Natural killer cell (primary cell): ENCODE measurements at regions of chrX and their contacts with region 1.

Region 1: DNA sequence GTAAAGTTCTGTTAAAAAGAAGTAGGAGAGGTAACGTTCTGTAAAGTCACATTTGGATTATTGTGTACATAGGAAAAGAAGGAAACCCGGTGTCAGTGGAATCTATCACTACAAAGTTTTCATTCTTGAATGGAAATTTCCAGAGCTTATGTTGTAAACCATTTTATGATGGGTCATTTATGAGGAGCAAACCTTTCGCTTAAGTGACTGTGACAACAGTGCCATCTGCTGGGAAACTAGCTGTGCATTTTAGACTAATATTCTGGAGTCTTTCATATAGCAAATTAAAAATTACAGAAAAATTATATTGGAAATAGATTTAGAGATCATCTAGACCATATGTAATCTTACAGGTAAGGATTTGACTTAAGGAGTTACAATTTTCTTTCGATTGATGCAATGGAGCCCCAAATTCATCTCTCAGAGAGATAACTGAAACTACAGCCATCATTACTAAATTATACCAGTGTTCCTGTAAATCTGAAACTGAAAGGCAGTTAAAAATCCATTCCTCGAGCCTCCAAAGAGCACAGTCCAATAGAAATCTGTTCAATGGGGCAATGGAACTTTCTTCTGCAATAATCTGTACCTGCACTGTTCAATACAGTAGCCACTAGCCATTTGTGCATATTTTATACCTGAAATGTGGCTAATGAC is 26.9 kb downstream of the ASB9 start:
- DNase-seq: peak in 1 of 2 donors; percentile 71
- ATAC-seq: no peak
- H3K4me3 ChIP-seq: no peak overlapping the region
- H3K4me3 Mint-ChIP-seq: no peak overlapping the region
- H3K27ac ChIP-seq: no peak overlapping the region
- H3K27ac Mint-ChIP-seq: no peak overlapping the region
- H3K4me1 ChIP-seq: no peaks in the 10 kb centered on the region
- H3K4me1 Mint-ChIP-seq: no peaks in the 10 kb centered on the region
- H3K27me3 ChIP-seq: no peaks in the 10 kb centered on the region
- H3K27me3 Mint-ChIP-seq: no peaks in the 10 kb centered on the region
- CTCF ChIP-seq: peak; percentile 54

Region 2: DNA sequence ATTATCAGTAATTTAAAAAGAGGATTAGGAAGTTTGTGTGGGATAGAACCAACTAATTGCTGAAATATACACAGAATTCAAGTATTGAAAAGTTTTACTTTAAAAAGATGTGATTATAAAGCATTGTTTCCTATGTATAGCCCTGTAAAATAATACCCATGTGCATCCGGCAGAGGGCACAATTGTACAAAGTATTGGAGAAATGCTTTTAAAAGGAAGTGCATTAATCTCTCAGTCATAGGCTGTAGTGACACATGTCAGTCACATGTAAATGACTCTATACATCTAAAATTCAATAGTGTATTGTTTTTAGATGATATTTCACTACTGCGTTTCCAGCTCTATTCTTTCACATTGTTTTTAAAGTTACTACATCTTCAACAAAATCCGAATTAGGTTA is 1203.7 kb before region 1 on chrX:
- intact Hi-C with region 1: loop called (anchors 1 kb)
- DNase-seq: peak in 1 of 2 donors; percentile 78
- ATAC-seq: peak; percentile 82 to 92 (median 84)
- H3K4me3 ChIP-seq: no peak overlapping the region
- H3K4me3 Mint-ChIP-seq: no peak overlapping the region
- H3K27ac ChIP-seq: no peak overlapping the region
- H3K27ac Mint-ChIP-seq: no peak overlapping the region
- H3K4me1 ChIP-seq: no peaks in the 10 kb centered on the region
- H3K4me1 Mint-ChIP-seq: no peaks in the 10 kb centered on the region
- H3K27me3 ChIP-seq: no peaks in the 10 kb centered on the region
- H3K27me3 Mint-ChIP-seq: peaks cover 10 to 48% of the 10 kb centered on the region in 2 donors
- CTCF ChIP-seq: peak; percentile 70

Region 3: GRCh38 chrX:15107367-15107988 is 135.5 kb before region 1 on chrX:
- intact Hi-C with region 1: loop called (anchors 2 kb)
- DNase-seq: peak in 1 of 2 donors; percentile 40
- ATAC-seq: no peak
- H3K4me3 ChIP-seq: no peak overlapping the region
- H3K4me3 Mint-ChIP-seq: no peak overlapping the region
- H3K27ac ChIP-seq: no peak overlapping the region
- H3K27ac Mint-ChIP-seq: no peak overlapping the region
- H3K4me1 ChIP-seq: no peaks in the 10 kb centered on the region
- H3K4me1 Mint-ChIP-seq: no peaks in the 10 kb centered on the region
- H3K27me3 ChIP-seq: no peaks in the 10 kb centered on the region
- H3K27me3 Mint-ChIP-seq: peaks cover 0 to 6% of the 10 kb centered on the region in 2 donors
- CTCF ChIP-seq: no peak

Region 4: DNA sequence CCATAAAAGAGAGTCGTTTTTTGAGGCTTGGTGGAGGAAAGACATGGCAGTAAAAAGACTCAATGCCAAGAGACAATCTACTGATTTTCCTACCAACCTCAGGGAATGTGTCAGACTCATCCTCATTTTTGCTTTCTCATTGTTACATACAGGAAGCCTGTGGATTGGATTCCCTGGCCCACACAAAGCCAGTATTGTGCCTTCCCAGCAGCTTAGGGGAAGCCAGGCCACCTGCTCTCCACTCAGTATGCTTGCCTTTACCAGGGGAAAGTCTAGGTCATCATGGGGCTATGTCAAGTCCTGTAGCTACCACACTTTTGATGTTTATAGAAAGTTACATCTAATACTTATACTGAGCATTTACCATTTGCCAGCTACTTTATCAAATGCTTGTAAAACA is 268.5 kb after region 1 on chrX:
- intact Hi-C with region 1: no loop called
- DNase-seq: no peak
- ATAC-seq: no peak
- H3K4me3 ChIP-seq: no peak overlapping the region
- H3K4me3 Mint-ChIP-seq: no peak overlapping the region
- H3K27ac ChIP-seq: no peak overlapping the region
- H3K27ac Mint-ChIP-seq: no peak overlapping the region
- H3K4me1 ChIP-seq: no peaks in the 10 kb centered on the region
- H3K4me1 Mint-ChIP-seq: no peaks in the 10 kb centered on the region
- H3K27me3 ChIP-seq: no peaks in the 10 kb centered on the region
- H3K27me3 Mint-ChIP-seq: peaks cover 0 to 32% of the 10 kb centered on the region in 2 donors
- CTCF ChIP-seq: no peak